ENCODE measurements at regions of chr14 and their contacts with region 1.

Region 1: DNA sequence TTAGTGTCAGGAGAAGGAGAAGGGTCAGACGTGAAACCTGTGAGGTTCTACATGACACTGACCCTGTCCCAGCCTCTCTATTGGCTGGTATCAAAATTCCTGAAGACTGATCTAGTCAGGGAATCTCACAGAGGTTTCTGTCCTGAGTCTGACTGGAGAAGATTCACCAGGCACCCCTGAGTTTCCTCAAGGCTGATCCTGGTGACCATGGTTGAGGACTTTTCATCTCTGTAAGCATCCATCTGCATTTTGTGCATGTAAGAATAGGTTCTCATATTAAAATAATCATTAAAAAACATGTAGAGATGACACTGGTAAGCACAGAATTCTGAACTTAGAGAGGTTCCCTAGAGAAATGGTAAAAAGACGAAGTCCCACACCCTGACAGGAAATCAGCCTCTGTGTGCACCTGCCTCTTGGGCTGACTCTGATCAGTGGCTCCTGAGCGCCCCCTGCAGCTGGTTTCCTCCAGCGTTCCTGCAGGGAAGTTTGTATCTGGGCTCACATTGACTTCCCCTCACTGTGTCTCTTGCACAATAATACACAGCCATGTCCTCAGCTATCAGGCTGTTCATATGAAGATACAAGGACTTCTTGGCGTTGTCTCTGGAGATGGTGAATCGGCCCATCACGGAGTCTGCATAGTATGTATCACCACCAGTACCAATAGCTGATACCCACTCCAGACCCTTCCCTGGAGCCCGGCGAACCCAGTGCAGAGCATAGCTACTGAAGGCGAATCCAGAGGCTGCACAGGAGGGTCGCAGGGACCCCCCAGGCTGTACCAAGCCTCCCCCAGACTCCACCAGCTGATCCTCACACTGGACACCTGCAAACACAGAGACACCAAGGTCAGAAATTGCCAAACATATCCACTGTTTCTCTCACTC is 991.9 kb downstream of the TMEM121 start:
- DNase-seq: peak; percentile 89
- ATAC-seq: peak; percentile 70
- H3K4me3 Mint-ChIP-seq: no peak overlapping the region
- H3K27ac Mint-ChIP-seq: no peak overlapping the region
- H3K4me1 Mint-ChIP-seq: peaks cover 12% of the 10 kb centered on the region
- H3K27me3 Mint-ChIP-seq: peaks cover 58% of the 10 kb centered on the region

Region 2: GRCh38 chr14:106268013-106268727 is 250.1 kb before region 1 on chr14:
- CTCF ChIA-PET with region 1: no interaction called
- DNase-seq: peak; percentile 87
- ATAC-seq: peak; percentile 63
- H3K4me3 Mint-ChIP-seq: no peak overlapping the region
- H3K27ac Mint-ChIP-seq: no peak overlapping the region
- H3K4me1 Mint-ChIP-seq: peaks cover 7% of the 10 kb centered on the region
- H3K27me3 Mint-ChIP-seq: peaks cover 69% of the 10 kb centered on the region

Region 3: GRCh38 chr14:106380740-106381139 is 137.6 kb before region 1 on chr14:
- CTCF ChIA-PET with region 1: no interaction called
- DNase-seq: no peak
- ATAC-seq: no peak
- H3K4me3 Mint-ChIP-seq: no peak overlapping the region
- H3K27ac Mint-ChIP-seq: no peak overlapping the region
- H3K4me1 Mint-ChIP-seq: peaks cover 2% of the 10 kb centered on the region
- H3K27me3 Mint-ChIP-seq: peaks cover 43% of the 10 kb centered on the region

Region 4: DNA sequence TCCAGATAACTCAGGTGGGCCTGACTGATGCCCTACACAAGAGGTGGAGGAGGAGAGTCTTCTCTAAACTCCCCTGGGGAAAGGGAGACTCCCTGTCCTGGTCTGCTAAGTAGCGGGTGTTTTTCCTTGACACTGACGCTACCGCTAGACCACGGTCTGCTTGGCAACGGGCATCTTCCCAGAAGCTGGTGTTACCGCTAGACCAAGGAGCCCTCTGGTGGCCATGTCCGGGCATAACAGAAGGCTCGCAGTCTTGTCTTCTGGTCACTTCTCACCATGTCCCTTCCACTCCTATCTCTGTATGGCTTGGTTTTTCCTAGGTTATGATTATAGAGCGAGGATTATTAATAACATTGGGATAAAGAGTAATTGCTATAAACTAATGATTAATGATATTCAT is 26.4 kb before region 1 on chr14:
- CTCF ChIA-PET with region 1: interaction called, 10 read pairs
- DNase-seq: no peak
- ATAC-seq: no peak
- H3K4me3 Mint-ChIP-seq: no peak overlapping the region
- H3K27ac Mint-ChIP-seq: no peak overlapping the region
- H3K4me1 Mint-ChIP-seq: peaks cover 45% of the 10 kb centered on the region
- H3K27me3 Mint-ChIP-seq: no peaks in the 10 kb centered on the region

Region 5: GRCh38 chr14:106530423-106531107 is 12.3 kb after region 1 on chr14:
- CTCF ChIA-PET with region 1: interaction called, 22 read pairs
- DNase-seq: peak; percentile 63
- ATAC-seq: peak; percentile 86
- H3K4me3 Mint-ChIP-seq: no peak overlapping the region
- H3K27ac Mint-ChIP-seq: no peak overlapping the region
- H3K4me1 Mint-ChIP-seq: peaks cover 5% of the 10 kb centered on the region
- H3K27me3 Mint-ChIP-seq: peaks cover 47% of the 10 kb centered on the region

Measured in activated CD8-positive, alpha-beta memory T cell treated with anti-CD3 and anti-CD28 coated beads, Interleukin-2, amount 10 ng/mL, durations not matched to agents 7 days and 5 days (primary cell).